Keratinocyte (primary cell): ENCODE measurements at regions of chr2 and their contacts with region 1.

Region 1: DNA sequence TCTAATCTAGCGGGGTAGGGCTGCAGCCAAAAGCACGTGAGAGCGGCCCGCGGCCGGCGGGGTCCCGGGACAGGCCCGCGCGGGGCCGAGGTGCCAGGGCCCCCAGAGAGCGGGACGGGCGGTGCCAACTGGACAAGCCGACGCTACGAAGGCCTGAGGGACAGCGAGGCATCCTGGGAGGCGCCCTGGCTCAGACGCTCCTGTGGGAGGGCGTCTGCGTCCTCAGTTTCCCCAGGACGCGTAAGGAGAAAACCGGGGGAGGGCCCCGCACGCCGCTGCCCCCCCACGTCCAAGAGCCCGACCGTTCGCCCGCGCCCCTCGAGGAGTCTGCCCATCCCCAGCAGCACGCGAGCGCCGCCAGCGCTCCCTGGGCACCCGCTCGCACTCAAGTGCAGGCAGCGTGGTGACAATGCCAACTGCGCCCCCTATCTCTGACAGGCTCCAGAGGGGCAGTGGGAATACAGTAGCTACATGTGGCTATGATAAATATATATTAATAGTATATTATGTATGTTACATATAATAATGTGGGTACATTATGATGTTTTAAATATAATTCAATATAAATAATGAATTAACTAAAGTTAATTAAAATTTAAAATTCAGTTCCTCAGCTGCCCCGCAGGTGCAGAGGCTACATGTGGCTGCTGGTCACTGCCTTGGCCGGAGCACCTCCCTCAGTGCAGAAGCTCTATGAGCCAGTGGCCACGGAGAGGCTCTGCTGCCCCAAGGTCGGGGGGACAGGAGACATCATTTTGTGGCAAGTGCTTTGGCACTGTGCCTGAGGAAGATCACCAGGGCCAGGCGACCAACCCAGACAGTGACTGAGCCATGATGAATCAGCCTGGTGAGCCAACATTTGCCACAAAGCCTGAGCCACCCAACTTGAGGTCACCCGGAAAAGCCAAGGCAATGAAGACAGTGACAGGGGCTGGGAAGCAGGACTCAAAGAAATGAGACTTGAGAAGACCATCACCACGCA is 5.5 kb upstream of the SFT2D3 start:
- DNase-seq: no peak
- H3K4me3 ChIP-seq: no peak overlapping the region
- H3K27ac ChIP-seq: no peak overlapping the region
- H3K4me1 ChIP-seq: peaks cover 6% of the 10 kb centered on the region
- H3K27me3 ChIP-seq: no peaks in the 10 kb centered on the region
- CTCF ChIP-seq: peak in 2 of 3 experiments; percentile 51 to 68

Region 2: DNA sequence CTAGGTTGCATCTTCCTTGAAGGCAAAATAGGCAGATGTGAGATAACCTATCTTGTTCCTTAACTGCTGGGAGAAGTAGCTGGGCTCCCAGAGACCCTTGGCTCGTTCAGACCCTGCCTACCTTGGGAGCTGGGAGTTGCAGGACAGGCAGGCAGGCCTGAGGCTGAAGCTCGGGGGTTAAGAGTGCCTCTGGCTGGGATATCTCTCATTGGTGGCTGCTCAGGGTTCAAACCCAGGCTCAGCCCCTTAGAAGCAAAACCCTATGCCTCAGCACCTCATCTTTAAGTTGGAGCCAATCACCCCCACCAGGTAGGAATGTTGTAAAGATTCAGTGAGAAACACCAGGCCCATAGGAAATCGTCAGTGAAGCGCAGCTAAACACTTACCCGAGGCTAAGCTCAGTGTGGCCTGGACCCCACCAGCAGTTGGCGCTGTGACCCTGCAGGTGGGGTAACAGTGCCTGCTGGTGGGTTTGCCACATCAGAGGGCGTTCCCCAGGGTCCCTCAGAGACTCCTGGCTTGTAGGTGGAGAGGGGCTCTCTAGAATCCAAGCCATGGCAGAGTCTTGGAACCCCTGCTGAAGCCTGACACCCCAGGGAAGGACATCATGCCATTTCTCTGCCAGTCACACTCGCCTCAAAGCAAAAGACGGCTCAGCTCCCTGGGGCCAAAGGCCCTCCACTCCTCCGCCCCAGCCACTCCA is 104.4 kb before region 1 on chr2:
- dilution Hi-C with region 1: loop called (anchors 25 kb)
- DNase-seq: no peak
- H3K4me3 ChIP-seq: no peak overlapping the region
- H3K27ac ChIP-seq: no peak overlapping the region
- H3K4me1 ChIP-seq: no peaks in the 10 kb centered on the region
- H3K27me3 ChIP-seq: peaks cover 4% of the 10 kb centered on the region
- CTCF ChIP-seq: peak; percentile 88 to 97 (median 96)

Region 3: GRCh38 chr2:128563348-128563687 is 867.5 kb after region 1 on chr2:
- dilution Hi-C with region 1: no loop called
- DNase-seq: no peak
- H3K4me3 ChIP-seq: no peak overlapping the region
- H3K27ac ChIP-seq: no peak overlapping the region
- H3K4me1 ChIP-seq: no peaks in the 10 kb centered on the region
- H3K27me3 ChIP-seq: peaks cover 4% of the 10 kb centered on the region
- CTCF ChIP-seq: no peak